Mammary epithelial cell (primary cell): ENCODE measurements at regions of chr17 and their contacts with region 1.

Region 1: DNA sequence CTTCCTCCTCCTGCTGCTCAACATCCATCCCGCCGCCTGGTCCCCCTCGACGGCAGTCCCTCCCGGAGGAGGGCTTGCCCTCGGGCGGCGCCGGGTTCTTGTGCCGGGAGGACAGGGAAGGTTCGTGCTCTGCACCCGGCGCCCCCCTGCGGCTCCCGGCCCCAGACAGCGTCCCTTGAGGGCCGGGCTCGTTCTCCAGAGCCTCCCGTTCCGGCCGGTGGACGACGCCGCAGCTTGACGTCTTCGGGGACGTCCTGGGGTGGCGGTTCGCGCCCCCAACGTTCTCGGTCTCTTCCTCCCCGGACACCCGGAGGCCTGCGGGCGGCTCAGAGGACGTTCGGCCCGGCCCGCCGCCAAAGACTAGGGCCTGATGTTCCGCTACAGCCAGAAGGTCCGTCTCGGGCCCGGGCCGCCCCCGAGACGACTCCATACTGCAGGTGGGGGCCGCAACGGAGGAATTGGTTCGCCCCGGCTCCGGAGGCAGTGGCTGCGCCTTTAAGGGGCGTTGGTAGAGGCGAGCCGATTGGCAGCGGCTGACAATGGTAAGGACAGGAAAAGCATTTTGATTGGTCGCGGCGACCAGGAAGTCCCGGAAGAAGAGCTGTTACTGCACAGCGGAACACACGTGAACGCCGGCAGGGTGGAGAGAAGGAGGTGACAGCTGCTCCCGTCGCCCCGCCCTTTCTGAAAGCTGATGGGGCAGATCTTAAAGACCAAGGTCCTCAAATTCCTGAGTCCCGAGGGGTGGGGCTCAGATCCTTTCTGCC is at the start of gene BORCS6:
- DNase-seq: peak; percentile 97
- H3K4me3 ChIP-seq: peak within 1 kb of the TSS; percentile 62 to 85 (median 80)
- H3K27ac ChIP-seq: peak within 1 kb of the TSS; percentile 52
- H3K4me1 ChIP-seq: peaks cover 31% of the 10 kb centered on the region
- H3K27me3 ChIP-seq: no peaks in the 10 kb centered on the region
- CTCF ChIP-seq: peak in 1 of 2 donors; percentile 9
- total RNA-seq, gene BORCS6: 4.9 to 8.8 TPM

Region 2: DNA sequence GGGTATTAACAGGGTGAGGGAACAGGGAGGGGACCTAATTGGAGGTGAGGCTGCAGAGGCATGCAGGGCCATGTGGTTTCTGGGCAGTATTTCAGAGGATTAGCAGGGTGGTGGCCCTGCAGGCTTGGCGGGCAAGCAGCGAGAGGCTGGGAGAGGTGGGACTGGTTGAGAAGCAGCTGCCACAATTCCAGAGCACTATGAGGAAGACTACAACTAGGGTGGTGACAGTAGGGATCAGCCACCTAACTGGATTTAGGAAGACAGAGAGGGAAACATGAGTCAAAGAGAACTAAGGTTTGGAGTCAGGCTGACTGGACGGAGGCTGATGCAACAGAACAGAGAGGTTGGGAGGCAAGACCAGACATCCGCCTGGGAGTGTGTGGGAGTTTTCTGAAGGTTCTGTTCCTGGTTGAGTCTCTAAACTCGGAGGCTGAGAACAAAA is 83.9 kb before region 1 on chr17:
- CTCF ChIA-PET with region 1: no interaction called
- dilution Hi-C with region 1: no loop called
- in situ Hi-C with region 1: no loop called
- intact Hi-C with region 1: no loop called
- DNase-seq: peak; percentile 84
- H3K4me3 ChIP-seq: no peak overlapping the region
- H3K27ac ChIP-seq: peak overlapping the region; percentile 49
- H3K4me1 ChIP-seq: peaks cover 47% of the 10 kb centered on the region
- H3K27me3 ChIP-seq: no peaks in the 10 kb centered on the region
- CTCF ChIP-seq: no peak

Region 3: DNA sequence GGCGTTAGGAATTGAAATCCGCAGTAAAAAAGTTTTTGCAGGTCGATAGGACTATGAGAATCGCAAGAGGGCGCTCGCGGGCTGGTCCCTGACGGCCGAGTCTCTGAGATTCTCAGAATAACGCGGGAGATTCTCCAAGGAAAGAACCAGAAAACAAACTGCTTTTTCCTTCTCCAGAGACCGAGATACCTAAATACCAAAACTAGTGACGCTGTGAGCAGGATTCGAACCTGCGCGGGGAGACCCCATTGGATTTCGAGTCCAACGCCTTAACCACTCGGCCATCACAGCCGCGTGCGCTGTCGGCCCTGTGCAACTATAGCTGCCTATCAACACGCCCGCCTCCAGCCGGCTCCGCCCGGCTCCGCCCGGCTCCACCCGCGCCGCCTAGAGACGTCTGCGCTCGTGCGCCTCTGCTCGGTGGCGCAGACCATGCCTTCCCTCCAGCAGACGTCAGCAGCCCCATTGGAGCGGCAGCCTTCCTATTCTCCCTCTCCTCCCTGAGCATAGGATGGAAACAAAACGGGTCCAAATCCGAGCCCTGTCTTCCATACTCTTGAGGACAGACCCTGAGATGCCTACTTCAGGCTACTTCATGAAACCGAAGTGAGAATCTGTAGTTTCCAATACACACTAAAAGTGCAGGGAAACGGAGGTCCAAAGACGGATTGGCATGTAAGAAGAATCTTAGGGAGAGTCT is 51.1 kb before region 1 on chr17:
- CTCF ChIA-PET with region 1: no interaction called
- dilution Hi-C with region 1: no loop called
- in situ Hi-C with region 1: no loop called
- intact Hi-C with region 1: loop called (anchors 1 kb)
- DNase-seq: peak; percentile 96
- H3K4me3 ChIP-seq: peak overlapping the region; percentile 10 to 44 (median 29)
- H3K27ac ChIP-seq: peak overlapping the region; percentile 61
- H3K4me1 ChIP-seq: peaks cover 18% of the 10 kb centered on the region
- H3K27me3 ChIP-seq: no peaks in the 10 kb centered on the region
- CTCF ChIP-seq: peak; percentile 83 to 89

Region 4: DNA sequence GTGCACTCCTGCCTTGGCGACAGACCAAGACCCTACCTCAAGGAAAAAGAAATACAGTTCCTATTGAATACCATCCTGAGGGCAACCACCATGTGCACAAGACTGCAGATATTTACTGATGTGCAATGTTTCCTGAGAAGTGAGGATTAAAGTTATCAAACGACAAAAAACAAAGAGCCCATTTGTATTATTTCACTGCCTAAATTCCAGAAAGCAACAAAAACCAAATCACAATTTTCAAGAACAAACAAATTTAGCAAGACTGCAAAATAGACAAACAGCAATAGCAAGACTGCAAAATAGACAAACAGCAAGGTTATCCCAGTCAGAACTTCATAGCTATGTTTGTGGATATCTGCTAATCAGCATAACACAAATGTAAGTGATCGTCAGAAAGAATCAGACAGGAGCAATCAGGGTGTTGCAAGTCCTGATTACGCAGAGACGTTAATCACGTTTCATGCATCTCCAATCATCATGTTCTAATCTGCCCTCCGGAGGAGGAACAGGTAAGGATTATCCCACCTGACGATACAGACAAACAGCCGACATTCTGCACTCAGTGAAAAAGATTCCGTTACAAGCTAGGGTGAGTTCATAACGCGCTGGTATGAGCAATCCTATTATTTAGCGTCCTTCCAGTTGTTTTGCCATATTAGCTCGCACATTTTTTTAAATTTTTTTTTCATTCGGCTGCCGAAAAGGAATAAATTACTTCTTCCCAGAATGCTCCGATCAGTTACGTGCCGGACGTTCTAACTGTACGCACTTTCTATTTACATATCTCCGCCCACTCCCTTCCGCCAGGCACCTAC is 16.6 kb before region 1 on chr17:
- CTCF ChIA-PET with region 1: no interaction called
- dilution Hi-C with region 1: no loop called
- in situ Hi-C with region 1: no loop called
- intact Hi-C with region 1: loop called (anchors 2 kb)
- DNase-seq: peak; percentile 99
- H3K4me3 ChIP-seq: peak overlapping the region; percentile 38 to 53 (median 48)
- H3K27ac ChIP-seq: peak overlapping the region; percentile 100
- H3K4me1 ChIP-seq: peaks cover 25% of the 10 kb centered on the region
- H3K27me3 ChIP-seq: no peaks in the 10 kb centered on the region
- CTCF ChIP-seq: no peak

Region 5: DNA sequence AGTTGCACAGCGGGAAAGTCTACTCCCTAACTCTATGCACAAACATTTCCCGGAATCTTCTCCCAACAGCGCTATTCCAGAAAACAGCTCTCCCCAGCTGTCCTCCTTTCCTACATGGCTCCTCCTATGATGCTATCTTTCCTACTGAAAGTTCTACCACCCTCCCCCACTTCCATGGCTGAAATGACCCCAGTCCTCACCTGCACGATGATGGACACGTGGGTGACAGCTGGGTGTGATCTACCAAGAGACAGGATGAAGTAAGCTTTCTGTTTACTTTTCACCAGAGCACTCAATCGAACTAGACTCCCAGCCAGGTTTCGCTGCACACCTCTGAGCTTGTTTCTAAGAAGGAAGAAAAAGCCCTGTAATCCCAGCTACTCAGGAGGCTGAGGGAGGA is 47.3 kb after region 1 on chr17:
- CTCF ChIA-PET with region 1: no interaction called
- dilution Hi-C with region 1: loop called (anchors 5 kb)
- in situ Hi-C with region 1: loop called in 1 of 2 experiments (anchors 10 kb)
- intact Hi-C with region 1: no loop called
- DNase-seq: no peak
- H3K4me3 ChIP-seq: no peak overlapping the region
- H3K27ac ChIP-seq: no peak overlapping the region
- H3K4me1 ChIP-seq: no peaks in the 10 kb centered on the region
- H3K27me3 ChIP-seq: no peaks in the 10 kb centered on the region
- CTCF ChIP-seq: no peak

Region 6: GRCh38 chr17:8275421-8276290 is 85.8 kb after region 1 on chr17:
- CTCF ChIA-PET with region 1: no interaction called
- dilution Hi-C with region 1: no loop called
- in situ Hi-C with region 1: no loop called
- intact Hi-C with region 1: no loop called
- DNase-seq: no peak
- H3K4me3 ChIP-seq: no peak overlapping the region
- H3K27ac ChIP-seq: no peak overlapping the region
- H3K4me1 ChIP-seq: no peaks in the 10 kb centered on the region
- H3K27me3 ChIP-seq: no peaks in the 10 kb centered on the region
- CTCF ChIP-seq: no peak

Region 7: GRCh38 chr17:8300627-8301242 is 110.8 kb after region 1 on chr17:
- CTCF ChIA-PET with region 1: interaction called, 5 read pairs
- dilution Hi-C with region 1: loop called (anchors 5 kb)
- in situ Hi-C with region 1: no loop called
- intact Hi-C with region 1: loop called (anchors 1 kb)
- DNase-seq: peak; percentile 50
- H3K4me3 ChIP-seq: no peak overlapping the region
- H3K27ac ChIP-seq: no peak overlapping the region
- H3K4me1 ChIP-seq: no peaks in the 10 kb centered on the region
- H3K27me3 ChIP-seq: no peaks in the 10 kb centered on the region
- CTCF ChIP-seq: peak; percentile 89 to 90